ENCODE measurements at regions of chr7 and their contacts with region 1.

Region 1: DNA sequence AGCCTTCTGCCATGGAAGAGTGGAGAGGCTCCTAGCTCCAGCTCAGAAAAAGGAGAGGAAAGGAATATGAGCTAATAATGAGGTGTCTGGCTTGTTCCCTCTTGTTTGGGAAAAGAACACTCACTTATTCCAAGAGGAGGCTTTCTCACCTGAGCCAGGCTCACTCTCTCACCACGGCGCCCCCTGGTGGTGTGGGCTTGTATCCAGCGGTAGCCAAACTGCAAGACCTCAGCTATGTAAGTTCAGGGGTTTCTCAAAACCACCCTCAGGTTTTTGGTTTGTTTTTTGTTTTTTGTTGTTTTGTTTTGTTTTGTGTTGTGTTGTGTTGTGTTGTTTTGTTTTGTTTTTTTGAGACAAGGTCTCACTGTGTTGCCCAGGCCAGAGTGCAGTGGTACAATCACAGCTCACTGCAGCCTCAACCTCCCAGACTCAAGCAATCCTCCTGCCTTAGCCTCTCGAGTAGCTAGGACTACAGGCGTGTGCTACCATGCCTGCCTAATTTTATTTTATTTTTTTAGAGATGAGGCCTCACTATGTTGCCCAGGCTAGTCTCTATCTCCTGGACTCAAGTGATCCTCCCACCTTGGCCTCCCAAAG is 124.0 kb downstream of the TMEM130 start:
- DNase-seq: peak; percentile 53
- ATAC-seq: peak; percentile 79
- H3K4me3 ChIP-seq: no peak overlapping the region
- H3K27ac ChIP-seq: no peak overlapping the region
- H3K4me1 ChIP-seq: no peaks in the 10 kb centered on the region
- H3K27me3 ChIP-seq: peaks cover 2 to 14% of the 10 kb centered on the region in 2 experiments; a peak in 2 of 5 replicates
- CTCF ChIP-seq: peak; percentile 82
- EP300 ChIP-seq: no peak
- POLR2A ChIP-seq: no peak
- RAD21 ChIP-seq: peak; percentile 64

Region 2: GRCh38 chr7:98434095-98434494 is 311.7 kb before region 1 on chr7:
- CTCF ChIA-PET with region 1: interaction called, 36 read pairs
- POLR2A ChIA-PET with region 1: no interaction called
- in situ Hi-C with region 1: loop called (anchors 5 kb)
- intact Hi-C with region 1: no loop called
- DNase-seq: no peak
- ATAC-seq: no peak
- H3K4me3 ChIP-seq: no peak overlapping the region
- H3K27ac ChIP-seq: no peak overlapping the region
- H3K4me1 ChIP-seq: no peaks in the 10 kb centered on the region
- H3K27me3 ChIP-seq: no peaks in the 10 kb centered on the region
- CTCF ChIP-seq: no peak
- EP300 ChIP-seq: no peak
- POLR2A ChIP-seq: no peak
- RAD21 ChIP-seq: no peak

Region 3: DNA sequence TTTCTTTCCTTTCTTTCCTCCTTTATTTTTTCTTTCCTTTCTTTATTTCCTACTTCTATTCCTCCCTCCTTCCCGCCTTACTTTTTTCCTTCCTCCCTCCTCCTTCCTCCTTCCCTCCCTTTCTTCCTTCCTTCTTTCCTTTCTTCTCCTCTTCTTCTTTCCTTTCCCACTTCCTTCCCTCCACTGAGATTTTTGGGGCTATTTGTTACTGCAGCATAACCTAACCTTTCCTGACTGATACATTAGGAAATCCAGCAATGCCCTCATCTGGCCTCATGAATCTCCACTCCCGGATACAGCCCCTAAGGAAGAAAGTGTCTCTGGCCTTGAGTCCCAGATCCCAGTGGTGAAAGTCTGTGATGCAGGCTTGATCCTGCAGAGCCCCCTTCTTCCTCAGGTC is 306.3 kb before region 1 on chr7:
- CTCF ChIA-PET with region 1: interaction called, 3 read pairs
- POLR2A ChIA-PET with region 1: no interaction called
- in situ Hi-C with region 1: loop called (anchors 5 kb)
- intact Hi-C with region 1: no loop called
- DNase-seq: no peak
- ATAC-seq: no peak
- H3K4me3 ChIP-seq: no peak overlapping the region
- H3K27ac ChIP-seq: no peak overlapping the region
- H3K4me1 ChIP-seq: no peaks in the 10 kb centered on the region
- H3K27me3 ChIP-seq: no peaks in the 10 kb centered on the region
- CTCF ChIP-seq: no peak
- EP300 ChIP-seq: no peak
- POLR2A ChIP-seq: no peak
- RAD21 ChIP-seq: no peak

Region 4: DNA sequence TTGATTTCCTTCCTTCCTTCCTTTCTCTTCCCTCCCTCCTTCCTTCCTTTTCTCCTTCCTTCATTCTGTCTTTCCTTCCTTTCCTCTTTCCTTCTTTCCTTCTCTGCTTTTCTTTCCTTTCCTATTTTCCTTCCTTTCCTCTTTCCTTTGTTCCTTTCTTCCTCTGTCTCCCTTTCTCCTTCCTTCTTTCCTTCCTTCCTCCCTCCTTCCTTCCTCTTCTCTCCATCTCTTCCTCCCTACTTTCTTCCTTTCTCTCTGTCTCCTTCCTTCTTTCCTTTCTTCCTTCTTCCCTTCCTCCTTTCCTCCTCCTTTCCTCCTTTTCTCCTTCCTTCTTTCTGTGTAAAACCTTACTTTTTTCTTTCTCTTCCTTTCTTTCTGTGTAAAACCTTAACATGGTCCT is 161.0 kb before region 1 on chr7:
- CTCF ChIA-PET with region 1: no interaction called
- POLR2A ChIA-PET with region 1: no interaction called
- in situ Hi-C with region 1: no loop called
- intact Hi-C with region 1: loop called (anchors 1 kb)
- DNase-seq: no peak
- ATAC-seq: no peak
- H3K4me3 ChIP-seq: no peak overlapping the region
- H3K27ac ChIP-seq: no peak overlapping the region
- H3K4me1 ChIP-seq: no peaks in the 10 kb centered on the region
- H3K27me3 ChIP-seq: peaks cover 0 to 6% of the 10 kb centered on the region in 2 experiments; a peak in 2 of 5 replicates
- CTCF ChIP-seq: no peak
- EP300 ChIP-seq: no peak
- POLR2A ChIP-seq: no peak
- RAD21 ChIP-seq: no peak

Region 5: GRCh38 chr7:98724591-98724990 is 21.2 kb before region 1 on chr7:
- CTCF ChIA-PET with region 1: no interaction called
- POLR2A ChIA-PET with region 1: no interaction called
- in situ Hi-C with region 1: no loop called
- intact Hi-C with region 1: no loop called
- DNase-seq: no peak
- ATAC-seq: no peak
- H3K4me3 ChIP-seq: no peak overlapping the region
- H3K27ac ChIP-seq: no peak overlapping the region
- H3K4me1 ChIP-seq: no peaks in the 10 kb centered on the region
- H3K27me3 ChIP-seq: peaks cover 2 to 11% of the 10 kb centered on the region in 2 experiments; a peak in 3 of 5 replicates
- CTCF ChIP-seq: no peak
- EP300 ChIP-seq: no peak
- POLR2A ChIP-seq: no peak
- RAD21 ChIP-seq: no peak

Region 6: DNA sequence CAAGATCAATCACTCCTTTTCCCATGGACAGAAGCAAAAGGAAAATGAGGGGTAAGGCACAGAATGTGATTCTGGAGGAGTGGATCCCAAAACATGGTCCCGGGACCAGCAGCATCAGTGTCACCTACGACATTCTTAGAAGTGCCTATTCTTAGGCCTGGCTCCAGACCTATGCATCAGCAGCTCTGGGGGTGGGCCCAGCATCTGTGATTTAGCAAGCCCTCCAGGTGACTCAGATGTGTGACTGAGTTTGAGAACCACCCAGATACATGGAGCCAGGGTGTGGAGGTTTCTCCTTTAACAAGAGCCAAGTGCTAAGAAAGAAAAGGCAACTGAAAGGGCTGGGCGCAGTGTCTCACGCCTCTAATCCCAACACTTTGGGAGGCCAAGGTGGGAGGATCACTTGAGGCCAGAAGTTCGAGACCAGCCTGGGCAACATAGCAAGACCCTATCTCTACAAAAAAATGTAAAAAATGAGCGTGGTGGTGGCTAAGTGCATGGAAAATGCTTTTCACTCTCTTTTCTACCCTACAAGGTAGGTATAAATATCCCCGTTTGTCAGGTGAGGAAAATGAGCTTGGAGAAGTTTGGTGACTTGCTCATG is 562.8 kb after region 1 on chr7:
- CTCF ChIA-PET with region 1: no interaction called
- POLR2A ChIA-PET with region 1: no interaction called
- in situ Hi-C with region 1: no loop called
- intact Hi-C with region 1: no loop called
- DNase-seq: no peak
- ATAC-seq: no peak
- H3K4me3 ChIP-seq: no peak overlapping the region
- H3K27ac ChIP-seq: no peak overlapping the region
- H3K4me1 ChIP-seq: peaks cover 13% of the 10 kb centered on the region
- H3K27me3 ChIP-seq: no peaks in the 10 kb centered on the region
- CTCF ChIP-seq: no peak
- EP300 ChIP-seq: no peak
- POLR2A ChIP-seq: no peak
- RAD21 ChIP-seq: no peak

Measured in HepG2 (cell line).